Activated CD8-positive, alpha-beta T cell treated with anti-CD3 and anti-CD28 coated beads, Interleukin-2, amount 10 ng/mL, durations not matched to agents 7 days and 5 days (primary cell): ENCODE measurements at regions of chr6 and their contacts with region 1.

Region 1: DNA sequence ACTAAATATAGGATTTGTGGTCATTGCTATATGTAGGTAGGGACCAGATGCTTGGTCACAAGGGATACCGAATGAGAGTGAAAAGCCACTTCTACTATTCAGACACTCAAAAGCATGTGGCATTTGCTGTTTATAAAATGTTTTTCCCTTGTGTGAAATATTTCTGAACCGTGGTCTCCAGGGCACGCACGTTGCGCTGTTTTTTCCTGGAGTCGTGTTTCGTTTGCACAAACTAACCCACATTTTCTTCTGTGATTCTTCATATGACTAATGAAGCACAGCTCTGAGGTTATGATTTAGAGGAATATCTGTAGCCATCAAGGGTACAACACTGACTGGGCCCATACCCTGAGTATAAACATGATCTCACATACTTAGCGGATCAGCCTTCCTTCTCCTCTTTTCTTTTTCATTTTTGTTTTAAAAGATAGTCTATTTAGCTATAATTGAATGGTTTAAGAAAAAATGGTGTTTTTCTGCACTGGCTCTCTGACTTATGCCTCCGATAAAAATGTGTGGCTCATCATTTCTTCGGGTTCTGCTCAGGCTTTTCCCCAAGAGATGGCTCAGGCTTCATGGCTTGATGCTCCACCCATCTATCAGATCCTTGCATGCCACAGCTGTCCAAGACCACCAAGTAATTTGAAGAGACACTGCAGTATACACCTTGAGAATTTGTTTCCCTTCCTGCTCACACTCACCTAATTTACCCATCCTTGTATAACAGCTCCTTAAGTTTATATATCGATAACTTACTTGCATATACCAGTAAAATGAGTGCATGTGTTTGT is 59.9 kb upstream of the HBS1L start:
- DNase-seq: peak; percentile 57
- ATAC-seq: peak; percentile 79
- H3K4me3 Mint-ChIP-seq: peak overlapping the region; percentile 19
- H3K27ac Mint-ChIP-seq: peak overlapping the region; percentile 81
- H3K4me1 Mint-ChIP-seq: peaks cover 71% of the 10 kb centered on the region
- H3K27me3 Mint-ChIP-seq: no peaks in the 10 kb centered on the region

Region 2: GRCh38 chr6:135094403-135094848 is 20.1 kb before region 1 on chr6:
- CTCF ChIA-PET with region 1: interaction called, 10 read pairs
- POLR2A ChIA-PET with region 1: interaction called, 6 read pairs
- DNase-seq: peak; percentile 63
- ATAC-seq: peak; percentile 87
- H3K4me3 Mint-ChIP-seq: peak overlapping the region; percentile 53
- H3K27ac Mint-ChIP-seq: peak overlapping the region; percentile 88
- H3K4me1 Mint-ChIP-seq: peaks cover 53% of the 10 kb centered on the region
- H3K27me3 Mint-ChIP-seq: no peaks in the 10 kb centered on the region

Region 3: DNA sequence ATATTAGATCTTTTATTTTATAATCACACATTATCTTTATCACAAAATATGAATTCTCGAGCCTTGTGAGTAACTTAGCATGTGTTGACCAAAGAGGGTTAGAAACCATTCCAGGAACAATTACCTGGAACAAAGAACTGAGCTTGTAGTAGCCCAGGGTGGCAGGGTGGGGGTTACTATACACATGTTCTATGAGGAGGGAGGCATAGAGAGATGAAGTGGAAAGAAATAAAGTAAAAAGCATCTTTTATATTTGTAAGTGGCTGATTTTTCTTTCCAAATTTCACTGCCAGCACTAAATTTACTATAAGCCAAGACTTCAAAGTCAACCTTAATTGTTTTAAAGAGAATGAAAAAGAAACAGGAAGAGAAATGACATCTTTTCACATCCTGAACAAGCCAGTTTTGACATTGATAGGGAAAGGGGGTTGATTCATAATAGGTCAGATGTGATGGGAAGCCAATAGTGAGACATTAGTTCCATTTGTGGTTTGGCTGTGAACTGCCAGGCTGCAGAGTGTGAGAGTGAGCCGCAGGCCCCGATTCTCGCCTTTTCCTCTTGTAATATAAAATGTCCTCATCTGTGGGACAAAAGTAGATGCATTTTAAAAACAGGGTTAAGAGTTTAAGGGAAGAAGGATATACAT is 13.8 kb after region 1 on chr6:
- CTCF ChIA-PET with region 1: interaction called, 9 read pairs
- POLR2A ChIA-PET with region 1: interaction called, 20 read pairs
- DNase-seq: peak; percentile 71
- ATAC-seq: peak; percentile 91
- H3K4me3 Mint-ChIP-seq: peak overlapping the region; percentile 49
- H3K27ac Mint-ChIP-seq: peak overlapping the region; percentile 90
- H3K4me1 Mint-ChIP-seq: peaks cover 40% of the 10 kb centered on the region
- H3K27me3 Mint-ChIP-seq: no peaks in the 10 kb centered on the region

Region 4: DNA sequence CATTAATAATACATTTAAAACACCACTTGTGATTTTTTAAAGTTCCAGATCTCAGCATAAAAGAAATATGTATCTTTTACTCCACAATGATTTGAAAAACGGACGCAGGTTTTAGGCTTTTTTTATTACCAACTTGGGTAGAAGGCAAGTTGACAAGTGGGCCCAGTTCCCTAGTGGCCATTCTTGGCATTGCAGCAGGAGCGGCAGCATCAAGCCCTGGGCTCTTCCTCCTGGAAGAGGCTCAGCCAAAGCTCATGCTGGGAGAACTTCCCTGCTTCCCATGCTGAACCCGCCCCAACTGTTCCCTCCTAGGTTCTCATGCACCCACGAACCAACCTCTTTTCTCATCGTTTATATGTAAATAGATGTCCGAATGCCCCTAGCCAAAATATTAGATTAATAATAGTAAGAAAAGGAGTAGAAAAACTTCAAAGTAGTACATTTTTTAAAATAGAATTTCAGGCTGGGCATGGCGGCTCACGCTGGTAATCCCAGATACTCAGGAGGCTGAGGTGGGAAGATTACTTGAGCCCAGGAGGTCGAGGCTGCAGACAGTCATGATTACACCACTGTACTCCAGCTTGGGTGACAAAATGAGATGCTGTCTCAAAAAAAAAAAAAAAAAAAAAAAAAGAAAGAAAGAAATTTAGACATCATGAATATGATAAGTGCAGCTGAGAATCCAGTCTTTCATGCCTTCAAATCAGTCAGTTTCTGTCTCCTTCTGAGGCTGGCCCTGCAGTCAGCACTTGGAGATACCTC is 48.3 kb after region 1 on chr6:
- CTCF ChIA-PET with region 1: interaction called, 3 read pairs
- POLR2A ChIA-PET with region 1: interaction called, 10 read pairs
- DNase-seq: peak; percentile 55
- ATAC-seq: no peak
- H3K4me3 Mint-ChIP-seq: peak overlapping the region; percentile 17
- H3K27ac Mint-ChIP-seq: peak overlapping the region; percentile 68
- H3K4me1 Mint-ChIP-seq: peaks cover 45% of the 10 kb centered on the region
- H3K27me3 Mint-ChIP-seq: no peaks in the 10 kb centered on the region

Region 5: GRCh38 chr6:135334169-135334568 is 219.6 kb after region 1 on chr6:
- CTCF ChIA-PET with region 1: no interaction called
- POLR2A ChIA-PET with region 1: no interaction called
- DNase-seq: no peak
- ATAC-seq: no peak
- H3K4me3 Mint-ChIP-seq: no peak overlapping the region
- H3K27ac Mint-ChIP-seq: no peak overlapping the region
- H3K4me1 Mint-ChIP-seq: no peaks in the 10 kb centered on the region
- H3K27me3 Mint-ChIP-seq: no peaks in the 10 kb centered on the region